ENCODE measurements at regions of chr1 and their contacts with region 1.

Region 1: GRCh38 chr1:154404984-154405761 is at the start of gene IL6R:
- DNase-seq: peak; percentile 97 to 98
- ATAC-seq: peak; percentile 93
- H3K4me3 ChIP-seq: peak within 1 kb of the TSS; percentile 52
- H3K27ac ChIP-seq: peak within 1 kb of the TSS in 1 of 2 donors; percentile 78
- H3K4me1 ChIP-seq: no peaks in the 10 kb centered on the region
- H3K27me3 ChIP-seq: no peaks in the 10 kb centered on the region
- total RNA-seq, gene IL6R: 16.5 to 18.2 TPM

Region 2: DNA sequence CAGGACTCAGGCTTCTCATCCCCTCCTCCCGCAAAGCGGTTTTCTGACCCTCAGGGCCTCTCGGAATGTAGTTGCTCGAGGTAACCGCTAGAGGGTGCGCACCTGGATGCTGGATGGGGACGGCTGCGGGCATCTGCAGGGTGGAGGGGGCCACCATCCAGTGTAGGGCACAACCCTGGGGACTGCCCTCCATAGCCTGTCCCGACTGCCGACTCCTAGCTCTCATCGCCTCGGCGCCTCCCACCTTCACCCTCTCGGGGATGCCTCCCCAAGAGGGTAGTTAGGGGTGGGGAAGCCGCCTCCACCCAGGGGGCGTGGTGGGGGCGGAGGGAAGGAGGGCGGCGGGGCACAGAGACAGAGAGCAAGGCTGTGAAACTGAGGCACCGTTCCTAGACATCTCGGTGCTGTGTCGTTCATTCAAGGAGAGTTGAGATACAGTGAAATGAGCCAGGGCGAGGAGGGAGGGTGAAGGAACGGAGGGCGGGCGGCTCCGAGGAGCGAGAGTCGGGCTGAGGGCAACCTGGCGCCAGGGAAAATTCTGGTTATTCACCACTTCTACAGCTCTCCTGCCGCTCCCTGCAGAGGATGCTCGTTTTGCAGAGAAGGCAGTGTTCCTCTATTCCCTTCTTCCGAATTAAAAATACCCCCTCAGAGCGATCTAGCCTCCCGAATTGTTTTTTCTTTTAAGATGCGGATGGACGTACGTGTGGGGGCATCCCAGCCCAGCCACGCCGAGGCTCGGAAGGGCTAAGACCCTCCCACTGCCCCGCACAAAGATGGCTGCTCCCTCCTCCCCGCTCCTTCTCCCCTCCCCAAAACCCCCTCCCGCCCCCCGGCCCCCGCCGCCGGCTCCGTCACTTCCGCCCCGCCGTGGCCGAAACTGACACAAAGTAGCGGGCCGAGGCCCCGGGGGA is 80.2 kb before region 1 on chr1 and contains the start of gene ATP8B2:
- intact Hi-C with region 1: loop called in 1 of 2 experiments (anchors 5 kb)
- DNase-seq: peak; percentile 84 to 93
- ATAC-seq: peak; percentile 82
- H3K4me3 ChIP-seq: peak within 1 kb of the TSS; percentile 90 to 91
- H3K27ac ChIP-seq: peak within 1 kb of the TSS; percentile 81 to 95
- H3K4me1 ChIP-seq: peaks cover 0 to 7% of the 10 kb centered on the region in 2 donors
- H3K27me3 ChIP-seq: no peaks in the 10 kb centered on the region
- total RNA-seq, gene ATP8B2: 122 to 176 TPM

Region 3: DNA sequence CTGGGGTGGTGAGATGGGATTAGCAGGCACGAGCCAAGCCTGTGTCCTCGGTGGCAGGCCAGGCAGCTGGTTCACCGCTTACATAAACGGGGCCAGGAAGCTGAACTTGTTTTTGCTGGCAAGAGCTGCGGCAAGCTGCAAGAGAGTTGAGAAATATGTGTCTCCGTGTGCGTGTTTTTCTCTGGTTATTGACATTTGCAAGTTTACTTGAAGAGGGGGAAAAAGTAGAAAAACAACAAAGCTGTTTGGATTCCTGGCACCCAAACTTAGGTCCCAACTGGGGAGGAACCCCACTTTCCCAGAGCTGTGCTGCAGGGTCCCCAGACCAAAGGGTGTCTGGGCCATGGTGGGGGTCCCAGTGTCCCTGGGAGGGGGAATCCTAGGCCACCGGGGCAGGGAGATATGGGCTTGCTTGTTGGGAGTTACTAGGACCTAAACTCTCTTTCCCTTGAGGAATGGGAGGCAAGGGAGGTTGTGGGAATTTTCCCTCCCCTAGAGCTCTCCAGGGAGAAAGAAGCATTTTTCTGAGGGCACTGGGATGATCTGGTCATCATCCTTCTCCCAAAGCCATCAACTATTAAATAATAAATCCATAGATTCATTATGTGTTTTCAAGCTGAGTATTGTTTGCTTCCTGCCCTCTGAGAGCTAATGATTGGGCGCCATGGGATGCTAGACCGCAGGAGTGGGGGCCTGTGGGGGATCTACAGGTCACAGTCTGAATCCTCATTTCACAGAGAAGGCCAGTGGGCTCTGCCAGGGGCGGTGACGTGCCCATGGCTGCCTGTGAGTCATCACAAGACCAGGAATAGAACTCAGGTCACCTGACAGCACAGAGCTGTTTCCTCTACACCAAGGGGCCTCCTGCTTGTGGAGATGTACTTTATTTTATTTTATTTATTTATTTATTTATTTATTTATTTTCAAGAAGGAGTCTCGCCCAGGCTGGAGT is 14.7 kb after region 1 on chr1:
- intact Hi-C with region 1: loop called in 1 of 2 experiments (anchors 1 kb)
- DNase-seq: peak; percentile 93 to 95
- ATAC-seq: peak; percentile 93
- H3K4me3 ChIP-seq: no peak overlapping the region
- H3K27ac ChIP-seq: peak overlapping the region in 1 of 2 donors; percentile 98
- H3K4me1 ChIP-seq: peaks cover 0 to 11% of the 10 kb centered on the region in 2 donors
- H3K27me3 ChIP-seq: no peaks in the 10 kb centered on the region

Region 4: GRCh38 chr1:154463512-154463990 is 58.4 kb after region 1 on chr1:
- intact Hi-C with region 1: loop called in 1 of 2 experiments (anchors 10 kb)
- DNase-seq: peak; percentile 46 to 69
- ATAC-seq: no peak
- H3K4me3 ChIP-seq: no peak overlapping the region
- H3K27ac ChIP-seq: no peak overlapping the region
- H3K4me1 ChIP-seq: no peaks in the 10 kb centered on the region
- H3K27me3 ChIP-seq: no peaks in the 10 kb centered on the region

Region 5: GRCh38 chr1:154546264-154547063 is 141.3 kb after region 1 on chr1:
- intact Hi-C with region 1: loop called in 1 of 2 experiments (anchors 5 kb)
- DNase-seq: peak in 1 of 2 donors; percentile 66
- ATAC-seq: no peak
- H3K4me3 ChIP-seq: no peak overlapping the region
- H3K27ac ChIP-seq: no peak overlapping the region
- H3K4me1 ChIP-seq: no peaks in the 10 kb centered on the region
- H3K27me3 ChIP-seq: no peaks in the 10 kb centered on the region